T-cell (primary cell): ENCODE measurements at regions of chr4 and their contacts with region 1.

Region 1: DNA sequence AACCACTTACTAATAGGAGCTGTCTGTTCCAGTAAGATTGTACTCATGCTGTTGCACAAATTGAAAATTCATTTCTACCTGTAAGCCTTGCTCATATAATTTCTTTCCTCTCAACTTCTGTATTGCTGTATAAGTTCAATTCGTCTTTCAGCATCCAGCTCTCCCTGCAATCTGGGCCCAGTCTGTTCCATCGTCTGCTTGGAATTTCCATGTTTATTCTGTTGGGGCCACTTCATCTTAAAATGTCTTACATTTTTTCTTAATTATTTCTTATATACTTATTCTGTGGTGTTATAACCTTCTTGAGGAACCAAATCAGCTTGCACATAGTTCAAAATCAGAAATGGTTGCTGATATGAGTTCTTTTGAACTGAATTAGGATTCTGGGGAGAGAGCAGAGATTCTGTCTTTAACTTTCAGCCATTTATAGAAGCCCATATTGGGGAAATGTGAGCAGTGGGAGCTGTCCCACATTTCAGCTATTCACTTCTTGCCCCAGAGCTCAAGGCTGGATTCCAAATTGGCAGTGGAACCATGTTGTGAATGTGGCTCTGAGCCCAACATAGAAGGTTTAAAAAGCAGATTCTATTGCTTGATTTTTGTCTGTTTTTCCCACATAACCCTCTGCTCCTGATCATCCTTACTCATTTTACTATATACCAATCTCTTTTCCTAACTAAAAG is 291.9 kb downstream of the BMPR1B start:
- DNase-seq: no peak
- ATAC-seq: no peak
- H3K4me3 ChIP-seq: no peak overlapping the region
- H3K4me3 Mint-ChIP-seq: no peak overlapping the region
- H3K27ac ChIP-seq: no peak overlapping the region
- H3K27ac Mint-ChIP-seq: no peak overlapping the region
- H3K4me1 ChIP-seq: no peaks in the 10 kb centered on the region
- H3K4me1 Mint-ChIP-seq: no peaks in the 10 kb centered on the region
- H3K27me3 ChIP-seq: no peaks in the 10 kb centered on the region
- H3K27me3 Mint-ChIP-seq: no peaks in the 10 kb centered on the region

Region 2: DNA sequence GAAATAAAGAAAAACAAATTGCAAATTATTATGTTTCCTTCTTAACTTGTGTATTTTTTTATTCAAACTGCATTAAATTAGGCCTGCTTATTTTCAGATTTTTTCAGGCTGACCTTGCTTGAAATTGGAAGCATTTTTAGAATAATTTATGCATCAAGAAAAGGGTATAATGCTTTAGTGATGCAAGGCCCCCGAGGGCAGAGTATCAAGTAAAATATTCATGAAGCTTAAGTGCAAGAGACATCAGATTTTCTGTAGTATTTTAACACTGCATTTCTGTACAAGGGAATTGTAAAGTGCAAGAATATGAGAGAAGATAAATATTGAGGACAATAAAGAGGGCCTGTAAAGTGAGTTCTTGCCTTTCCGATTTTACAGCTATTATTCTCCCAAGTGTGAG is 1707.0 kb before region 1 on chr4:
- CTCF ChIA-PET with region 1: no interaction called
- POLR2A ChIA-PET with region 1: no interaction called
- DNase-seq: no peak
- ATAC-seq: no peak
- H3K4me3 ChIP-seq: no peak overlapping the region
- H3K4me3 Mint-ChIP-seq: no peak overlapping the region
- H3K27ac ChIP-seq: no peak overlapping the region
- H3K27ac Mint-ChIP-seq: no peak overlapping the region
- H3K4me1 ChIP-seq: no peaks in the 10 kb centered on the region
- H3K4me1 Mint-ChIP-seq: no peaks in the 10 kb centered on the region
- H3K27me3 ChIP-seq: no peaks in the 10 kb centered on the region
- H3K27me3 Mint-ChIP-seq: no peaks in the 10 kb centered on the region

Region 3: DNA sequence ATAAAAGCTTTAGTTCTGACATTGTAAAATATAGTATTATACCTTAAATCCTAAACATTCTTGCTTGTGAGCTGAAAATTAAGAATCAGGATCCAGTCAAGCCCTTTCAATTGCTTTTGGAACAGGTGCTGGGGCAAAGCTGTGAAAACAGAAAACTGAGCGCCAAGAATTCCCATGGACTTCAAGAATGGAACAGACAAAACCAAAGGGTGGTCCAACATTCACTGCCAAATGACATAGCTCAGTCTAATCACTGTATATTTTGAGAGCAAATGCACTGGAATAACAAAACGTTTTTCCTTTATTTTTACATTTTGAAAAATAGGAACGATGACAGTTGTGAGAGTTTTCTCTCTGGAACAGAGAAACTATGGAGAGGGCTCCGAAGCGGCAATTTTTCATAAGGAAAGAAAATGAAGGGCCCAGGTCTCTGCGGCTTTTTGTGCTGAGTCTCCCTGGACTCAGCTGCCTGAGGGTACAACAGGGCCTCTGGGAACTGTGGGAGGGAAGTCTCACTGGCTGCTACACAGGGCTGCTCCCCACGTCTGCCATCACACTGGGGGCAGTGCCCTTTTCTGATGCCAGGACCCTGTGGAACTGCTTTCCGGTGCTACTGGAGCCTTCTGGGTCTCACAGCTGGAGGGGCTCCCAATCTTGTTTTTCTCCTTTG is 347.9 kb before region 1 on chr4:
- CTCF ChIA-PET with region 1: no interaction called
- POLR2A ChIA-PET with region 1: no interaction called
- DNase-seq: no peak
- ATAC-seq: no peak
- H3K4me3 ChIP-seq: no peak overlapping the region
- H3K4me3 Mint-ChIP-seq: no peak overlapping the region
- H3K27ac ChIP-seq: no peak overlapping the region
- H3K27ac Mint-ChIP-seq: no peak overlapping the region
- H3K4me1 ChIP-seq: no peaks in the 10 kb centered on the region
- H3K4me1 Mint-ChIP-seq: no peaks in the 10 kb centered on the region
- H3K27me3 ChIP-seq: peaks cover 0 to 4% of the 10 kb centered on the region in 2 experiments
- H3K27me3 Mint-ChIP-seq: peaks cover 0 to 1% of the 10 kb centered on the region in 2 donors

Region 4: DNA sequence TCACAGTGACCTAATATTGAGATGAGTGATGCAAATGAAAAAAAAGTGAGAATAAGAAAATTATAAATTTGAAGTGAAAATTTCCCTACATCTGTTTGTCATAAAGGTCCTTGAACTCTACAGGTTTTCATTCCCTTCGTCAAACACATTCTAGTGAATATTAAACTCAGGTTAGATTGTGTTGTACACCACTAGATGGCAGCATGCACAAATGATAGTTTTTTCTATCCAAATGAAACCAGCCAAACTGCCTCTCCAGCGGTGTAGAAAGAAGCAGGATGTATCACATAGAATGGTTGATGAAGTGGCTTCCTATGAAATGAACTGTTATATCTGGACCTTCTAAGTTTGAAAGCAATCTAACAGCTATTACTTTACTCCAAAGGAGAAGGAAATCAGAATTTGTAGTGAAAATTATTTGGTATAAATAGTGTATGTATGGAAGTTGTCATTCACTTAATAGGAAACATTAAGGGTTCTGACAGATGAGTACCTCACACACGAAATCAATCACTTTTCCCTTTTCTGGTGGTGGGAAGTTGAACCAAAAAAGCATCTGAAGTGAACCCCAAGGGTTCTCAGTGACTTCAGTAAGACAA is 116.3 kb after region 1 on chr4:
- CTCF ChIA-PET with region 1: no interaction called
- POLR2A ChIA-PET with region 1: no interaction called
- DNase-seq: peak in 12 of 35 experiments; percentile 6 to 75 (median 14)
- ATAC-seq: peak; percentile 46 to 75 (median 69)
- H3K4me3 ChIP-seq: no peak overlapping the region
- H3K4me3 Mint-ChIP-seq: no peak overlapping the region
- H3K27ac ChIP-seq: no peak overlapping the region
- H3K27ac Mint-ChIP-seq: no peak overlapping the region
- H3K4me1 ChIP-seq: peaks cover 0 to 3% of the 10 kb centered on the region in 2 experiments
- H3K4me1 Mint-ChIP-seq: peaks cover 2 to 5% (median 2%) of the 10 kb centered on the region in 3 donors
- H3K27me3 ChIP-seq: no peaks in the 10 kb centered on the region
- H3K27me3 Mint-ChIP-seq: no peaks in the 10 kb centered on the region

Region 5: DNA sequence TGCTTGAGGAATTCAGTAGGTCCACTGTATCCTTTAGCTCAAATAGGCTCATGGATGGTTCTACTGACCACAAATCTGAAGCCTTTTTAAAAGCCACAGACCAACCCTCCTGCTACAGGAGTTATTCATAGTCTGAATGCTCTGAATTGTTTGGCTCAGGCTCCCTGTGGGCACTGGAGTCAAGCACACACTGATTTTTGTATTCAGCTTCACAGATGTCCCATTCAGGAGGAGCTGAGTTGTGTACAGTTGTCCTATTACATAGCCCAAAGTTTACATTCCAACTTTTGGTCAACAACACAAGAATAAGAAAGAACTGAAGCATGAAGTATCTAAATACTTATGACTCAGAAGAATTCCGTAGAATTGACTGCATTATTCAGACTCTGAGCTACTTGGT is 255.2 kb after region 1 on chr4:
- CTCF ChIA-PET with region 1: no interaction called
- POLR2A ChIA-PET with region 1: interaction called in 1 of 2 experiments, 11 read pairs
- DNase-seq: no peak
- ATAC-seq: no peak
- H3K4me3 ChIP-seq: no peak overlapping the region
- H3K4me3 Mint-ChIP-seq: no peak overlapping the region
- H3K27ac ChIP-seq: no peak overlapping the region
- H3K27ac Mint-ChIP-seq: no peak overlapping the region
- H3K4me1 ChIP-seq: no peaks in the 10 kb centered on the region
- H3K4me1 Mint-ChIP-seq: no peaks in the 10 kb centered on the region
- H3K27me3 ChIP-seq: no peaks in the 10 kb centered on the region
- H3K27me3 Mint-ChIP-seq: peaks cover 0 to 2% of the 10 kb centered on the region in 2 donors

Region 6: DNA sequence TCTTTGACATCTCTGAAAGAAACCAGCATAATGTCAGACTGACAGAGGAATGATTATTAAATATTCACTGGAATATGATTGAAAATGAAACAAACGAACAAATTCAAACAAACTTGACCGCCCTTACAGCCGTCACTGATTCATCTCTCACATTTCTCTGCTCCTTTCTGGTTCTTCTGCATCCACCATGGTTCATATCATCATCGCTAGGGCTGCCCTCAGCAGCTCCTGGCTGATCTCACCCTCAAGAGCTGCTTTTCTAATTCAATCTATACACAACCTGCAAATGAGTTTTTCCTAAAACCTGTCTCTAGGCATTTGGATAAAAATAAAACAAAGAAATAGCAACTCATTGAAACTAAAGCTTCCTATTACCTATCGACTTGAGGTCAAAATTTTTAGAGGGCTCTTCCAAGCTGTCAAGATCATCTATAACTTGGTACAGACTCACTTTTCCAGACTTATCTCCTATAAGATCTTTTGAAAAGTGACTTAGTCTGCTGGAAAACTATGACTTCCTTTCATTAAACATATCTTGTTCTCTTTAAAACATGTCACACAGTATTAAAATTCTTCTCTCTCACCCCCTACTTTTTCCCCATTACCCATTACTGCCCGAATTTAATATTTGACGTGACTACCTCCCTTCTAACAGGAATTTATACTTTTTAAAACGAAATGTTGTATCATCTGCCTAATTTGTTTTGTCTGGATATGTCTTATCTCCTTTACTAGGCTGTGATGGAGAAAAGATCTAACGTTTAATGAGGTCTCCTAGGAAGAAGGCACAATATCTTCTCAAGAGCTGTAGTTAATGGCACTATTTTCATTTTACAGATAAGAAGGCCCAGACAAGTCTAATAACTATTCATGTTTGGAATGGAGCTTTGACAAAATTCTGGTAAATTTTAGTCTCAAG is 570.1 kb after region 1 on chr4:
- CTCF ChIA-PET with region 1: interaction called in 1 of 2 experiments, 11 read pairs
- POLR2A ChIA-PET with region 1: no interaction called
- DNase-seq: no peak
- ATAC-seq: no peak
- H3K4me3 ChIP-seq: no peak overlapping the region
- H3K4me3 Mint-ChIP-seq: no peak overlapping the region
- H3K27ac ChIP-seq: no peak overlapping the region
- H3K27ac Mint-ChIP-seq: no peak overlapping the region
- H3K4me1 ChIP-seq: no peaks in the 10 kb centered on the region
- H3K4me1 Mint-ChIP-seq: no peaks in the 10 kb centered on the region
- H3K27me3 ChIP-seq: no peaks in the 10 kb centered on the region
- H3K27me3 Mint-ChIP-seq: no peaks in the 10 kb centered on the region